IMR-90 (cell line): ENCODE measurements at regions of chr14 and their contacts with region 1.

Region 1: GRCh38 chr14:74018586-74019407 is at the starts of genes BBOF1 and ENTPD5:
- DNase-seq: peak; percentile 80
- ATAC-seq: peak; percentile 97
- H3K4me3 ChIP-seq: peak within 1 kb of the TSS; percentile 91
- H3K27ac ChIP-seq: peak within 1 kb of the TSS; percentile 95
- H3K4me1 ChIP-seq: peaks cover 4% of the 10 kb centered on the region; the same call in 1 of the 2 replicates
- H3K27me3 ChIP-seq: no peaks in the 10 kb centered on the region
- CTCF ChIP-seq: no peak
- POLR2A ChIP-seq: no peak
- RAD21 ChIP-seq: no peak
- total RNA-seq, gene BBOF1: 1.6 and 1.7 TPM in 2 replicates
- total RNA-seq, gene ENTPD5: 6.4 and 8.1 TPM in 2 replicates

Region 2: DNA sequence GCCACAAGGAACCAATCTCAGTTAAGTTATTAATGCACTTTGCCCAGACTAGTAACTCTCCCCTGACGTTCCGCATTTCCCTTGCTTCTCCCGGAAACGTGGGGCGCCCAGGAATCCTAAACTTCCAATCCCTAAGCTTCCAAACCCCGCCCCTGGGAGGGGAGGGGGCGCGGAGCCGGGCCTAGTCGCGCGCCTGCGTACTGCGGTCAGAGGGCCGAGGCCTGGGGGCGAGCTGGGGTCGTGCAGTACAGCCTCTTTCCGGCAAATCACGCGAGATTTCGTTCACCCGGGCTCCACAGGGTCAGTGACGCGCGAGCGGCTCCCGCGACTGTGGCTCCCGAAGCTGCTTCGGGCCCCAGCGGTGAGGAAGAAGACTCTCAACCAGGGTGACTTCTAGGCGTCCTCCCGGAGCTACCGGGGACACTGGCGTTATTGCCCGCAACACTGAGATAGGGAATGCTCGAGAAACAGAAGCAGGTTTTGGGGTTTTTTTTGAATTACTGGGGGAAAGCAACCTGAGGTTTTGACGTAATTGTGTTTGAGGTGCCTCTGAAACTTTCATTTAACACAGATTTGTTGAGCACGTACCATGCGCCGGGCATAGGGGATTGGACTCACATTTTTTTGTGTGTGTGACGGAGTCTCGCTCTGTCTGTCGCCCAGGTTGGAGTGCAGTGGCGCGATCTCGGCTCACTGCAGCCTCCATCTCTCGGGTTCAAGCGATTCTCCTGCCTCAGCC is 167.0 kb before region 1 on chr14 and contains the start of gene PTGR2:
- CTCF ChIA-PET with region 1: no interaction called
- POLR2A ChIA-PET with region 1: no interaction called
- dilution Hi-C with region 1: no loop called
- in situ Hi-C with region 1: no loop called
- intact Hi-C with region 1: no loop called
- DNase-seq: peak; percentile 96
- ATAC-seq: peak; percentile 96
- H3K4me3 ChIP-seq: peak within 1 kb of the TSS; percentile 62
- H3K27ac ChIP-seq: peak within 1 kb of the TSS; percentile 88
- H3K4me1 ChIP-seq: no peaks in the 10 kb centered on the region; the same call in 1 of the 2 replicates
- H3K27me3 ChIP-seq: no peaks in the 10 kb centered on the region
- CTCF ChIP-seq: peak; percentile 12; the same call in 1 of the 2 replicates
- POLR2A ChIP-seq: peak; percentile 89
- RAD21 ChIP-seq: no peak
- total RNA-seq, gene PTGR2: 1.3 and 2.8 TPM in 2 replicates

Region 3: GRCh38 chr14:73949744-73950734 is 68.8 kb before region 1 on chr14 and contains the starts of genes COQ6 and FAM161B:
- CTCF ChIA-PET with region 1: no interaction called
- POLR2A ChIA-PET with region 1: no interaction called
- dilution Hi-C with region 1: no loop called
- in situ Hi-C with region 1: no loop called
- intact Hi-C with region 1: loop called (anchors 2 kb)
- DNase-seq: peak; percentile 96
- ATAC-seq: peak; percentile 99
- H3K4me3 ChIP-seq: peak within 1 kb of the TSS; percentile 71
- H3K27ac ChIP-seq: peak within 1 kb of the TSS; percentile 68
- H3K4me1 ChIP-seq: no peaks in the 10 kb centered on the region; the same call in 1 of the 2 replicates
- H3K27me3 ChIP-seq: no peaks in the 10 kb centered on the region
- CTCF ChIP-seq: peak; percentile 27; the same call in 1 of the 2 replicates
- POLR2A ChIP-seq: peak; percentile 93
- RAD21 ChIP-seq: no peak
- total RNA-seq, gene COQ6: 16.1 and 21.0 TPM in 2 replicates
- total RNA-seq, gene FAM161B: 2.5 and 2.8 TPM in 2 replicates

Region 4: GRCh38 chr14:73977600-73978295 is 41.0 kb before region 1 on chr14:
- CTCF ChIA-PET with region 1: no interaction called
- POLR2A ChIA-PET with region 1: interaction called, 7 read pairs
- dilution Hi-C with region 1: no loop called
- in situ Hi-C with region 1: no loop called
- intact Hi-C with region 1: loop called (anchors 2 kb)
- DNase-seq: peak; percentile 86
- ATAC-seq: peak; percentile 94
- H3K4me3 ChIP-seq: no peak overlapping the region
- H3K27ac ChIP-seq: peak overlapping the region; percentile 75
- H3K4me1 ChIP-seq: peaks cover 10% of the 10 kb centered on the region
- H3K27me3 ChIP-seq: no peaks in the 10 kb centered on the region
- CTCF ChIP-seq: no peak
- POLR2A ChIP-seq: no peak
- RAD21 ChIP-seq: no peak